Activated CD4-positive, alpha-beta memory T cell treated with anti-CD3 and anti-CD28 coated beads for 36 hours (primary cell): ENCODE measurements at regions of chr6 and their contacts with region 1.

Region 1: DNA sequence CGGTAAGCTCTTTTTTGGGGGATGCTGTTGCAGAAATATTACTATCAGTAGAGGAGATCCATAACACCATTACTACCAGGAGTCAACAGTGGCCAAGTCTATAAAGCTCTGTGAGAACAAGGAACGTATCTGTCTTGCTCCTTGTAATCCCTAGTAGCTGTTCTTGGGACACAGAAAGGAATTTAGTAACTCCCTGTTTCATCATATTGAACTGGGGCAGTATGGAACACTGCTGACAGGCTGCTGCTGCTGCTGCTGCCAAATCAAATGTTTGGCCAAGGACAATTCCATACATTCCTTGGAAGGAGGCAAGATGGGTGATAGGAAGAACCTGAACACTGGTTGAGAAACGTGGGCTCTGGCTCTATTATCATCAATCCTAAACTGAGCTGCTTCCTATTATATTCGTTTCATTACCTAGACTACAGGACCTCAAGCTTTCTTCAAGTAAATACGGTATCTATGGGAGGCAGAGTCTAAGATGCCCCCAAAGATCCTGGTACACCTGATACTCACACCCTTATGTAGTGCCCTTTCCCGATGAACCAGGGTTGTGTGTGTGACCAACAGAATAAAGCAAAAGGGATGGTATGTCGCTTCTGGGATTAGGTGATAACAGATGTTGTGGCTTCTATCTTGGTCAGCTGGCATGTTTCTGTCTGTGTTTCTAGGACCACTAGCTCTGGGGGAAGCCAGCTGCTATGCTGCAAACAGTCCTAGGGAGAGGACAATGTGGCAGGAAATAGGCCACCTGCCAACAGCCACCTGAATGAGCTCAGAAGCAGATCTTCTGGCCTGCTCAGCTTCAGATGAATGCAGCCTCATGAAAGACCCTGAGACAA is 39.5 kb downstream of the ELOVL5 start:
- DNase-seq: no peak
- H3K4me3 Mint-ChIP-seq: no peak overlapping the region
- H3K27ac Mint-ChIP-seq: peak overlapping the region; percentile 44
- H3K4me1 Mint-ChIP-seq: peaks cover 80% of the 10 kb centered on the region
- H3K27me3 Mint-ChIP-seq: no peaks in the 10 kb centered on the region

Region 2: DNA sequence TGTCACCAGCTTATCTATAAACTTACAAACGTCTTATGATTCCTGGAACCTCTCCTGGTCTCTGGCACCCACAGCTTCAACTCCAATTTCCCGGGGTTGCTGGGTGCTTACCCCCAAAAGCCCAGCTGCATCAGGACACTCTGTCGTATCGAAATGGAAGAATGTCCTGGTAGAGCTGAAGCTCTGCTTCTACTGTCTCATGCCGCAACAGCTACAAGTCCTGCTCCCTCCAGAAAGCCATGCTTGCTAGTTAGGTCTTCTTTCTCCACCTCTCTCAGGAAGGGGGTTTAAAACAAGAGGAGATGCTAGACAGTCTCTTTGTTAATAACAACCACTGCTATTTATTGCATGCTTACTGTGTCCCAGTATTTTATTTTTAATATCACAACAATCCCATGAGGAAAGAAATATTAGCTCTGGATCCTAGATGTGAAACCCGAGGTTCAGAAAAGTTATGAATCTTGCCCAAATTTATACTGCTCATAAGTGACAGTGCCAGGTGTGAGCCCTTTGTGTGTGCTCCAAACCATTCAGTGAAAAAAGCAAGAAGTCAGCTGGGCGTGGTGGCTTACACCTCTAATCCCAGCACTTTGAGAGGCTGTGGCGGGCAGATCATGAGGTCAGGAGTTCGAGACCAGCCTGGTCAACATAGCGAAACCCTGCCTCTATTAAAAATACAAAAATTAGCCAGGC is 78.4 kb before region 1 on chr6:
- CTCF ChIA-PET with region 1: no interaction called
- POLR2A ChIA-PET with region 1: no interaction called
- intact Hi-C with region 1: loop called (anchors 2 kb)
- DNase-seq: no peak
- H3K4me3 Mint-ChIP-seq: no peak overlapping the region
- H3K27ac Mint-ChIP-seq: no peak overlapping the region
- H3K4me1 Mint-ChIP-seq: peaks cover 32% of the 10 kb centered on the region
- H3K27me3 Mint-ChIP-seq: no peaks in the 10 kb centered on the region

Region 3: GRCh38 chr6:53322188-53323029 is 13.1 kb after region 1 on chr6:
- CTCF ChIA-PET with region 1: interaction called, 3 read pairs
- POLR2A ChIA-PET with region 1: interaction called, 12 read pairs
- intact Hi-C with region 1: loop called (anchors 1 kb)
- DNase-seq: no peak
- H3K4me3 Mint-ChIP-seq: no peak overlapping the region
- H3K27ac Mint-ChIP-seq: peak overlapping the region; percentile 60
- H3K4me1 Mint-ChIP-seq: peaks cover 65% of the 10 kb centered on the region
- H3K27me3 Mint-ChIP-seq: no peaks in the 10 kb centered on the region

Region 4: GRCh38 chr6:53348371-53349208 is 39.3 kb after region 1 on chr6 and contains the start of gene ELOVL5:
- CTCF ChIA-PET with region 1: interaction called, 3 read pairs
- POLR2A ChIA-PET with region 1: interaction called, 8 read pairs
- intact Hi-C with region 1: loop called (anchors 1 kb)
- DNase-seq: peak; percentile 98
- H3K4me3 Mint-ChIP-seq: peak within 1 kb of the TSS; percentile 93
- H3K27ac Mint-ChIP-seq: peak within 1 kb of the TSS; percentile 95
- H3K4me1 Mint-ChIP-seq: peaks cover 43% of the 10 kb centered on the region
- H3K27me3 Mint-ChIP-seq: no peaks in the 10 kb centered on the region
- total RNA-seq, gene ELOVL5: 112 to 121 TPM

Region 5: GRCh38 chr6:53359072-53359842 is 50.0 kb after region 1 on chr6:
- CTCF ChIA-PET with region 1: no interaction called
- POLR2A ChIA-PET with region 1: interaction called, 4 read pairs
- intact Hi-C with region 1: loop called (anchors 1 kb)
- DNase-seq: peak; percentile 95
- H3K4me3 Mint-ChIP-seq: peak overlapping the region; percentile 92
- H3K27ac Mint-ChIP-seq: peak overlapping the region; percentile 98
- H3K4me1 Mint-ChIP-seq: peaks cover 39% of the 10 kb centered on the region
- H3K27me3 Mint-ChIP-seq: no peaks in the 10 kb centered on the region

Region 6: GRCh38 chr6:53410508-53411258 is 101.4 kb after region 1 on chr6:
- CTCF ChIA-PET with region 1: interaction called, 3 read pairs
- POLR2A ChIA-PET with region 1: no interaction called
- intact Hi-C with region 1: loop called (anchors 2 kb)
- DNase-seq: peak; percentile 70
- H3K4me3 Mint-ChIP-seq: no peak overlapping the region
- H3K27ac Mint-ChIP-seq: no peak overlapping the region
- H3K4me1 Mint-ChIP-seq: peaks cover 3% of the 10 kb centered on the region
- H3K27me3 Mint-ChIP-seq: no peaks in the 10 kb centered on the region